H1 (cell line): ENCODE measurements at regions of chr1 and their contacts with region 1.

Region 1: GRCh38 chr1:103948526-103948925 is 198.8 kb downstream of the AMY1C start:
- DNase-seq: no peak
- H3K4me3 ChIP-seq: no peak overlapping the region
- H3K27ac ChIP-seq: no peak overlapping the region
- H3K4me1 ChIP-seq: no peaks in the 10 kb centered on the region
- H3K27me3 ChIP-seq: no peaks in the 10 kb centered on the region
- CTCF ChIP-seq: no peak; a peak in 1 of 4 replicates
- EP300 ChIP-seq: no peak
- POLR2A ChIP-seq: no peak
- RAD21 ChIP-seq: peak in 1 of 2 experiments; percentile 40; a peak in 3 of 4 replicates

Region 2: DNA sequence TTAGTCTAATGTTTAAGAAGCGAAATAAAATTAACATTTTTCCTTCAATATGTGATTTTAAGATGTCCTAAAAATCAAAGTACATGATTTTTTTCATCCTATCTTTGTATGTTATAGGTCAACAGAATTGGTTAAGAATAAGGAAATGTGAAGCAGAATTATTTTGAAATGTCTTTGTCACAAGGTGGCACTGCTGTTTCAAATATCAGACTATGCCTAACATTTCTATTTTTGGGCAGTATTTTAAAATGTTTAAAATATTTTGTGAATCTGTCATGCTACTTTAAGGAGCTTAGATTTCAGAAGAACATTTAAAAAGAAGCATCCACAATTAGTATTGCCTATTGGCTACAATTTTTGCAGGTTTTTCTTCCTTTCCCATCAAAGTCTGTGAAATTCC is 160.1 kb before region 1 on chr1:
- CTCF ChIA-PET with region 1: interaction called, 10 read pairs
- POLR2A ChIA-PET with region 1: no interaction called
- DNase-seq: no peak
- H3K4me3 ChIP-seq: no peak overlapping the region
- H3K27ac ChIP-seq: no peak overlapping the region
- H3K4me1 ChIP-seq: no peaks in the 10 kb centered on the region
- H3K27me3 ChIP-seq: no peaks in the 10 kb centered on the region
- CTCF ChIP-seq: peak in 2 of 3 experiments; percentile 1 to 19; a peak in 2 of 4 replicates
- EP300 ChIP-seq: no peak
- POLR2A ChIP-seq: no peak
- RAD21 ChIP-seq: peak in 1 of 2 experiments; percentile 68

Region 3: DNA sequence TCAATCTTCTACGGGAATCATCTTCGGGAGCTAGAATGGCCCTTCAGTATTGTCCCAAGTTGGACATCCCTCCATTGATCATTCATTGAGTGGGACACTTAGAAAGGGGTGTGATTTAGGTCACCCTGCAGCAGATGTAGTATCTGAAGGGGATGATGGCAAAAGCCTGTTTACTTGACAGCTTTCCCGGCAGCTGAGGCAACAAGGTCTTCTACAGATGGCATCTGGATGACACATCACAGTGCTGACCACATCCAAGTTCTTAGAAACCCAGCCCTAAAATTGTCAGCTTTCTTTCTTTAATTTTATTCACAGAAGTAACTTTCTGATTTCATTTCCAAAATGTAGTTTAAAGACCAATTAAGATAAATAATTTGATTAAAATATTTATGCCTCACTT is 48.5 kb before region 1 on chr1:
- CTCF ChIA-PET with region 1: no interaction called
- POLR2A ChIA-PET with region 1: no interaction called
- DNase-seq: no peak
- H3K4me3 ChIP-seq: no peak overlapping the region
- H3K27ac ChIP-seq: no peak overlapping the region
- H3K4me1 ChIP-seq: no peaks in the 10 kb centered on the region
- H3K27me3 ChIP-seq: no peaks in the 10 kb centered on the region
- CTCF ChIP-seq: no peak
- EP300 ChIP-seq: no peak
- POLR2A ChIP-seq: no peak
- RAD21 ChIP-seq: no peak

Region 4: DNA sequence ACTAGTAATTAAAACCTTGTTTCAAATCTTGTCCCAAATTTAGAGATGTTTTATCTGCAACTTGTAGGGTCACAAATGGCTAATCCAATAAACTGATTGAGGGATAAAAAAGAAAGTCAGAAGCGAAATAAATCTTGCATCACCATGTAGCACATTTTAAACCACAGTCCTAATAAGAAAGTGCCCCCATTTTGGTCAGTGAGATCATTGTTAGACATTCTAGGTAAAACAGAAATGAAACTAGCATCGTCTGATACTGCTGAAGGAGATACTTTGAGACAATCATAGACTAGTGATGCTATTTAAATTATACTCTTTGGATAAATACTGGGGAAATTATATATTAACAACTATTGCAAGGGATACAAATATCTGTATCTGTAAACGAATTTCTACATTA is 49.1 kb after region 1 on chr1:
- CTCF ChIA-PET with region 1: no interaction called
- POLR2A ChIA-PET with region 1: no interaction called
- DNase-seq: no peak
- H3K4me3 ChIP-seq: no peak overlapping the region
- H3K27ac ChIP-seq: no peak overlapping the region
- H3K4me1 ChIP-seq: no peaks in the 10 kb centered on the region
- H3K27me3 ChIP-seq: no peaks in the 10 kb centered on the region
- CTCF ChIP-seq: no peak
- EP300 ChIP-seq: no peak
- POLR2A ChIP-seq: no peak
- RAD21 ChIP-seq: no peak